Sigmoid colon (tissue), 7 donors: ENCODE measurements at regions of chr15 and their contacts with region 1.

Region 1: DNA sequence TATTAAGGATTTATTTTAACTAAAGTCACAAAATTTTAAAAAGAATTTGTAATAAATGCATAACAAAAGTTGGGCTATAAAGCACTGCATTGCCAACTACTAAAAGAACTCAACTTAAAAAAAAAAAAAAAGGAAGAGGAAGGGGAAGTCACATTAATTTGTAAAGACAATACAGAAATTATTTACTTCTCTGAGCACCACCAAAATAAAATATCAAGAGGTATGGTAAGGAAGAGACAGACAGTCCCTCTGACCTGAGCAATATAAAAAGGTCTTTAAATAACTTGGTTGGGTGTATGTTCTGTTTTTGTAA is 83.5 kb downstream of the UACA start:
- DNase-seq: no peak
- H3K4me3 ChIP-seq: no peak overlapping the region
- H3K27ac ChIP-seq: no peak overlapping the region
- H3K4me1 ChIP-seq: no peaks in the 10 kb centered on the region
- H3K27me3 ChIP-seq: no peaks in the 10 kb centered on the region
- CTCF ChIP-seq: no peak
- EP300 ChIP-seq: no peak
- POLR2A ChIP-seq: no peak

Region 2: GRCh38 chr15:70474471-70475396 is 205.1 kb before region 1 on chr15:
- intact Hi-C with region 1: no loop called
- DNase-seq: peak; percentile 83
- H3K4me3 ChIP-seq: peak overlapping the region in 3 of 4 donors; percentile 4 to 16 (median 16)
- H3K27ac ChIP-seq: peak overlapping the region; percentile 61 to 75 (median 75)
- H3K4me1 ChIP-seq: peaks cover 0 to 18% (median 8%) of the 10 kb centered on the region in 4 donors
- H3K27me3 ChIP-seq: no peaks in the 10 kb centered on the region
- CTCF ChIP-seq: no peak
- EP300 ChIP-seq: no peak
- POLR2A ChIP-seq: no peak

Region 3: GRCh38 chr15:70722266-70723121 is 42.6 kb after region 1 on chr15:
- intact Hi-C with region 1: loop called (anchors 1 kb)
- DNase-seq: no peak
- H3K4me3 ChIP-seq: no peak overlapping the region
- H3K27ac ChIP-seq: no peak overlapping the region
- H3K4me1 ChIP-seq: peaks cover 0 to 12% (median 11%) of the 10 kb centered on the region in 4 donors
- H3K27me3 ChIP-seq: no peaks in the 10 kb centered on the region
- CTCF ChIP-seq: peak in 3 of 4 experiments; percentile 46 to 72 (median 60)
- EP300 ChIP-seq: no peak
- POLR2A ChIP-seq: no peak

Region 4: DNA sequence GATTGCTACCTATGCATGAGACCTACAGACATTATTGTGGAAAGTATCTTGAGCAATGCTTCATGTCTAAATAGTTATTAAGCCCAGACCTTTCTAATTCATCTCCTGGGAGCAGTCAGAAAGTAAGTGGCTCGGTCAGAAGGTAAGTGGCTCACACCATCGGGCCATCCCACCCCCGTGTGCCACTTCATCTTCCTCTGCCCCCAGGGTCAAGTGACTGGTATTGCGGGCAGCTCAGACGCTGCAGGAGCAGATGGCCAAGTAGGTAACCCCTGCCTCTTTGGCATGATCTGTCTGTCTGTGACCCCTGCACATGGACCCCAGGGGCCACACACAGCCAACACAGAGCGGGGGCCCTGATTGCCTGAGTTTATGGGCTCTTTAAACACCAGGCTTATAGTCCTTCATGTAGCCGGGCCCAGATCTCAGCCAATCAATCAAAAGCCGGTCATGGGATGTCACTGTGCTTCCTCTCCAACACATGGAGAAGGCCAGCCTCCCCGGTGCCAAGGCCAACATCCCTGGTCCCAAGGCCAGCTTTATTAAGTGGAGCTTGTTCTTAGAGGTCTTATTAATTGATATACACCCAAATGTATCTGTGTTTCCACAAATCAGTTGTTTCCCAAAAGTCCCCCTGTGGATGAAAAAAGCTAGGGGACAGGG is 131.2 kb after region 1 on chr15:
- intact Hi-C with region 1: loop called (anchors 1 kb)
- DNase-seq: no peak
- H3K4me3 ChIP-seq: no peak overlapping the region
- H3K27ac ChIP-seq: no peak overlapping the region
- H3K4me1 ChIP-seq: no peaks in the 10 kb centered on the region
- H3K27me3 ChIP-seq: no peaks in the 10 kb centered on the region
- CTCF ChIP-seq: no peak
- EP300 ChIP-seq: no peak
- POLR2A ChIP-seq: no peak